Caco-2 (cell line): ENCODE measurements at regions of chr3 and their contacts with region 1.

Region 1: DNA sequence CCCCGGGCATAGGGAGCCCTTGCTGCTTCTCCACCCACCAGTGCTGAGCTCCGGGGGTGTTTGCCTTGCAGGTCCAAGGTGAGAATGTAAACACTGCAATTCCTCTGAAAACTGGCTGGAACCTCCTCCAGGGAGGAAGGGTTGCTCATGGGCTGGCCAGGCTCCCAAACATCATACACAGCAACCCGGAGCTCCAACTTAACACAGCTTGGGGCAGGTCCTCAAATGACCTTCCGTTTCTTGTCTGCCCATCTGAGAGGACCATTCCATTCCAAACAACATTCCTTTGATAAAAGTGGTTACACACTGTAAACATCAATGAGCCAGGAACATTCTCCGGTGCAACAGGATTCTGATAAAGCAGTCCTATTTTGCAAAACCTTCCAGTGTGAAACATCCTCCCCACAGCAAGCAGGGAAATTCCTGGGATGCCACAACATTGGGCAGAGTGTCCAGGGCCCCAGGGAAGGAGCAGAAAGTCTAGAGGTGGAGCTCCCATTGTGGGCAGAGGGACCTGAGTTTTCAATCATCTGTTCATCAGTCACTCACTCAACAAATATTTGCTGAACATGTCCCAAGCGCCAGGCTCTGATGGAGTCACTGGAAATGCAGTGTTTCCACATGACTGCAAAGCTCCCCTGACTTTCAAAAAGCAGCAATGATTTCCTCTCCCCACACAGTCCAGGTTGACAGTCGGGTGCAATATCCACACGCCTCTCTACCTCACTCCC is 7.3 kb upstream of the HEG1 start:
- DNase-seq: peak; percentile 95 to 97
- H3K4me3 ChIP-seq: no peak overlapping the region
- H3K4me3 Mint-ChIP-seq: peak overlapping the region; percentile 58
- H3K27ac Mint-ChIP-seq: peak overlapping the region; percentile 97
- H3K4me1 ChIP-seq: peaks cover 89% of the 10 kb centered on the region
- H3K4me1 Mint-ChIP-seq: peaks cover 69% of the 10 kb centered on the region
- H3K27me3 ChIP-seq: no peaks in the 10 kb centered on the region
- H3K27me3 Mint-ChIP-seq: no peaks in the 10 kb centered on the region
- CTCF ChIP-seq: no peak

Region 2: DNA sequence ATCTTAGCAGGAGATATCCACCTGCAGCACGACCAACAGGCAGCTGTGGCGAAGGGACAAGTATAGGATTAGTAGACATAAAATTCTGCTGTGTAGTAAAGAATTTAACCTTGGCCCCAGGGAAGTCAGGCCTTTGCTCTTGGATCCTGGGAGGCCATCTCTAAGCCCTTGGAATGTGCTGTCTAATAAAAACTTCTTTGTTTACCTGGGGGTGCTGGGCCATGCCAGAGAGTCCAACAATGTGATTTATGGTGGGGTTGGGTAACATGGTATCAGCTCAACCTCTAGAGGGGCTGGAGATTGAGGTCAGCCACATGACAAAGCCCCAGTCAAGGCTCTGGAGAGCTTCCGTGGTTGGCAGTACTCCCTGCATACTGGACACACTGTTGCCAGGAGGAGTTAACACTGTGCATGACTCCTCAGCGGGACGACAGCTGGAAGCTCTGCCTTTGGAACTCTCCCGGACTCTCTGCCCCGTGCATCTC is 59.6 kb before region 1 on chr3:
- CTCF ChIA-PET with region 1: no interaction called
- POLR2A ChIA-PET with region 1: interaction called, 8 read pairs
- intact Hi-C with region 1: loop called (anchors 1 kb)
- DNase-seq: peak; percentile 88 to 91
- H3K4me3 ChIP-seq: no peak overlapping the region
- H3K4me3 Mint-ChIP-seq: peak overlapping the region; percentile 17
- H3K27ac Mint-ChIP-seq: peak overlapping the region; percentile 38
- H3K4me1 ChIP-seq: peaks cover 42% of the 10 kb centered on the region
- H3K4me1 Mint-ChIP-seq: peaks cover 23% of the 10 kb centered on the region
- H3K27me3 ChIP-seq: no peaks in the 10 kb centered on the region
- H3K27me3 Mint-ChIP-seq: no peaks in the 10 kb centered on the region
- CTCF ChIP-seq: peak in 1 of 2 experiments; percentile 4

Region 3: DNA sequence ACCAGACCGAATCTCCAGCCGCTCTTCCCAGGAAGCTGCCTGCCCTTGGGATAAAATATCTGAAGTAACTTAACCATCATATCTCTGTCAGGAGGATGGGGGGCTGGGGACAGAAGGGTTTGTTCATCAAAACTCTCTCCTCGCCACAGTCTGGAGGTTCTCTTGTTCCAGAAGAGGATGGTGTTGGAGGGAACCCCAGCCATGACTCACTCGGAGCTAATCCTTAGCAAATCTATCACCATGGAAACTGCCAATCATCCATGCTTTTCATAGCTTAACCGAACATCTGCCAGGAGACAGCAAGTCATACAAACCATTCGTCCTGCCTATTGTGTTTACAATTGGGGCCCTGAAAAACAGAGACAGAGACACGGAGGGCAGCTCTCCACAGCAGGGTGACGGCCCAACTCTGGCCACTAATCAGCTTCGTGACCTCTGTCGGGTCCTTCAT is 66.5 kb after region 1 on chr3:
- CTCF ChIA-PET with region 1: no interaction called
- POLR2A ChIA-PET with region 1: no interaction called
- intact Hi-C with region 1: loop called (anchors 5 kb)
- DNase-seq: peak; percentile 68 to 69
- H3K4me3 ChIP-seq: no peak overlapping the region
- H3K4me3 Mint-ChIP-seq: no peak overlapping the region
- H3K27ac Mint-ChIP-seq: peak overlapping the region; percentile 60
- H3K4me1 ChIP-seq: peaks cover 18% of the 10 kb centered on the region
- H3K4me1 Mint-ChIP-seq: peaks cover 14% of the 10 kb centered on the region
- H3K27me3 ChIP-seq: no peaks in the 10 kb centered on the region
- H3K27me3 Mint-ChIP-seq: no peaks in the 10 kb centered on the region
- CTCF ChIP-seq: no peak

Region 4: DNA sequence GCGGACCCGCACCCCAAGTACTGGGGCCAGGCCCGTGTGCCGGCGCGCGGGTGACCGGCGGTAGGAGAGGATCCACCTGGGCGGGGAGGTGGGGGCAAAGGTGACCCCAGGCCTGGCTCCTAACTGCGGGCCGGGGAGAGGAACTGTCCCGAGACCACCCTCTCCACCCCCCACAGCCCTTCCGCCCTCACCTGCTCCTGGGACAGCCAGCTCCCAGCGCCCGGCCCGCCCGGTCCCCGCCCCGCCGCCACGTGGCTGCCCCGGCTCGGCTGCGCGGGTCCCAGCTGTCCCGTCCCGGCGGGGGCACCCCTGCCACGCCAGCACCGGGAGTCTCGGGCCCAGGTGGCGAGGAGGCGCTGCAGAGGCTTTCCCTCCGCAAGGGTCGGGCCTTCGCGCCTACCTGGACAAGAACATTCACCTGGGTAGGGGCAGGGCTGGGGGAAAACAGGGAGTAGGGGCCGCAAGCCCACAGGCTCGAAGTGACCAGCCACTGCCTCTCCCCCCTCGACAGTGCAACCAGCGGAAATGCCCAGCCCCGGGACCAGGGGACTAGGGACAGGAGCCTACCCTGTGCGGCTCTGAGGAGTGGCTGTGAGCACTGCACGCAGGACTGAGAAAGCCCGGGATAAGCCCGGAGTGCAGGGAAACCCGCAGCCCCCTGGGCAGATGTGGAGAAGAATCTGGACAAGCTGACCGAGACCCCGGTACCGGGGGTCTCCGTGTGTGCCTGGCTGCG is 149.6 kb after region 1 on chr3 and contains the start of gene SLC12A8:
- CTCF ChIA-PET with region 1: no interaction called
- POLR2A ChIA-PET with region 1: no interaction called
- intact Hi-C with region 1: loop called (anchors 2 kb)
- DNase-seq: peak; percentile 58 to 72
- H3K4me3 ChIP-seq: peak within 1 kb of the TSS; percentile 78
- H3K4me3 Mint-ChIP-seq: peak within 1 kb of the TSS; percentile 78
- H3K27ac Mint-ChIP-seq: peak within 1 kb of the TSS; percentile 76
- H3K4me1 ChIP-seq: peaks cover 36% of the 10 kb centered on the region
- H3K4me1 Mint-ChIP-seq: peaks cover 40% of the 10 kb centered on the region
- H3K27me3 ChIP-seq: no peaks in the 10 kb centered on the region
- H3K27me3 Mint-ChIP-seq: no peaks in the 10 kb centered on the region
- CTCF ChIP-seq: no peak
- total RNA-seq, gene SLC12A8: 23.3 and 28.0 TPM in 2 replicates

Region 5: DNA sequence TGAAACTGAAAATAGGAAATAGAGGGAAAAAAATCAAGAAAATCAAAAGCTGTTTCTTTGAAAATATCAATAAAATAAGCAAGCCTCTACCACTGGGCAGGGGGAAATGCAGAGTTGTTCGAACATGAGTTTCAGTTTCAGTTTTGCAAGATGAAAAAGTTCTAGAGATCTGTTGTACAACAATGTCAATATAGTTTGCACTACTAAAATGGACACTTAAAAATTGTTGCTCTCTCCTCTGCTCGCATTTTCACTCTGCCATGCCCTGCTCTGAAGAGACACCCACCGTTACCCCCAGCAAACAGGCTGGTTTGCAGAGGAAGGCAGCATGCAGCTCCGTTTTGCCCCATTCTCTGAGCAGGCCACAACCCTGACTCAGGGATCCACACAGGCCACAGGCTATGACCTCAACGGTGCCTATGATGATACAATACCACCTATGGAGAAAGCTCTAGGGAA is 247.6 kb after region 1 on chr3:
- CTCF ChIA-PET with region 1: no interaction called
- POLR2A ChIA-PET with region 1: no interaction called
- intact Hi-C with region 1: no loop called
- DNase-seq: no peak
- H3K4me3 ChIP-seq: no peak overlapping the region
- H3K4me3 Mint-ChIP-seq: no peak overlapping the region
- H3K27ac Mint-ChIP-seq: no peak overlapping the region
- H3K4me1 ChIP-seq: no peaks in the 10 kb centered on the region
- H3K4me1 Mint-ChIP-seq: no peaks in the 10 kb centered on the region
- H3K27me3 ChIP-seq: no peaks in the 10 kb centered on the region
- H3K27me3 Mint-ChIP-seq: no peaks in the 10 kb centered on the region
- CTCF ChIP-seq: no peak